ENCODE measurements at regions of chr3 and their contacts with region 1.

Region 1: GRCh38 chr3:41881233-41881821 is 80.6 kb downstream of the ULK4 start:
- DNase-seq: no peak
- H3K4me3 ChIP-seq: no peak overlapping the region
- H3K27ac ChIP-seq: no peak overlapping the region
- H3K4me1 ChIP-seq: no peaks in the 10 kb centered on the region
- H3K27me3 ChIP-seq: no peaks in the 10 kb centered on the region
- CTCF ChIP-seq: peak; percentile 39 to 80 (median 67)
- POLR2A ChIP-seq: no peak

Region 2: GRCh38 chr3:40337136-40338108 is 1543.9 kb before region 1 on chr3:
- intact Hi-C with region 1: loop called (anchors 10 kb)
- DNase-seq: no peak
- H3K4me3 ChIP-seq: no peak overlapping the region
- H3K27ac ChIP-seq: no peak overlapping the region
- H3K4me1 ChIP-seq: no peaks in the 10 kb centered on the region
- H3K27me3 ChIP-seq: no peaks in the 10 kb centered on the region
- CTCF ChIP-seq: no peak
- POLR2A ChIP-seq: no peak

Region 3: DNA sequence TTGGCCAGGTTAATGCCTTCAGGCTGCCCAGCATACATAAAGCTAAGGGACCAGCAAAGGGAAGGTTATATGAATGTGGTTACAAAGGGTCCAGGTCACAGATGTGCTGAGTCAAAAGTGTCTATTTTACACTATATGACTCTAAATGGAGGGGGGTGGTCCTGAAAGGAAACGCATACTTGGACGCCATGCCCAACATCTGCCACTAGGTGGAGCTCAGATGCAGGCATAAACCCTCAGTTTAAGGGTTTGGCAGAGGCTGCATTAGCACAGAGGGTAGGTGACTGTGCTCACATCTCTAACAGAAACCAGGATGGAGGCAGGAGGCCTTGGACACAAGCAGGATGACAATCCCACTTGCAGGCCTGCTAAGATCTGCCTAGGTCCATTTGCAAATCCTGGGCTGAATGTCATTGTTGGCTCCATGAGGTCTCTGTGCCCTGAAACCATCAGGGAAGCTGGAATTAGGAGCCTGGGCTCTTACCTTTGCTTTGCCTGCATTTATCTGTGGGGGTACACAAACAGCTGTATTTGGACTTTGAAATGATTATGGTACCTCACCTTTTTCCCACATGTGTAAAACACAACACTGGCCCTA is 1300.7 kb before region 1 on chr3:
- intact Hi-C with region 1: loop called (anchors 5 kb)
- DNase-seq: no peak
- H3K4me3 ChIP-seq: no peak overlapping the region
- H3K27ac ChIP-seq: no peak overlapping the region
- H3K4me1 ChIP-seq: peaks cover 0 to 22% (median 4%) of the 10 kb centered on the region in 3 donors
- H3K27me3 ChIP-seq: no peaks in the 10 kb centered on the region
- CTCF ChIP-seq: peak; percentile 80 to 91 (median 88)
- POLR2A ChIP-seq: no peak

Region 4: DNA sequence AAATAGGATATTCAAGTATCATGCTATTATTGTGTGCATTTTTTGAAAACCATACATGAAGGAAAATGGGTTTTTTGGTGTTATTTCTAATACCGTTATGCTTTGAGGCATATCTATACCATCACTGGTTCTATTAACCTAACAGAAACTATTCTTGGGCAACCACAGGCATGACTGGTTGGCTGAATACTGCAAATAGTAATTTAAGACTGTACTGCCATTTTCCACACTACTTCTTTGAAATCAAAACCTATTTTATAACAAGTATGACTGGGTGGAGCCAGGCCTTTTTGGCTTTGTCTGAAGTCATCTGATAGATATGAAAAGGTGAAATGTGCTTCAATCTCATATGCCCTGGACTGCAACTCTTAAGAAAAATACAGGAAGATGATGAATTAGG is 34.5 kb before region 1 on chr3:
- intact Hi-C with region 1: no loop called
- DNase-seq: no peak
- H3K4me3 ChIP-seq: no peak overlapping the region
- H3K27ac ChIP-seq: no peak overlapping the region
- H3K4me1 ChIP-seq: no peaks in the 10 kb centered on the region
- H3K27me3 ChIP-seq: no peaks in the 10 kb centered on the region
- CTCF ChIP-seq: no peak
- POLR2A ChIP-seq: no peak

Measured in esophagus squamous epithelium (tissue), 5 donors.